Heart left ventricle (tissue), 16 donors: ENCODE measurements at regions of chr10 and their contacts with region 1.

Region 1: GRCh38 chr10:103918053-103918846 is at the start of gene STN1:
- DNase-seq: peak; percentile 98 to 99 (median 99)
- ATAC-seq: peak; percentile 98
- H3K4me3 ChIP-seq: peak within 1 kb of the TSS; percentile 27 to 97 (median 74)
- H3K27ac ChIP-seq: peak within 1 kb of the TSS; percentile 90 to 100 (median 96)
- H3K4me1 ChIP-seq: peaks cover 0 to 44% (median 29%) of the 10 kb centered on the region in 12 donors
- H3K27me3 ChIP-seq: no peaks in the 10 kb centered on the region
- CTCF ChIP-seq: peak in 4 of 12 donors; percentile 11 to 19 (median 14)
- POLR2A ChIP-seq: peak; percentile 85 to 97
- total RNA-seq, gene STN1: 28.6 to 53.1 (median 32.7) TPM

Region 2: GRCh38 chr10:103958996-103959395 is 40.7 kb after region 1 on chr10:
- intact Hi-C with region 1: loop called in 2 of 10 experiments (anchors 5 kb)
- DNase-seq: no peak
- ATAC-seq: no peak
- H3K4me3 ChIP-seq: no peak overlapping the region
- H3K27ac ChIP-seq: no peak overlapping the region
- H3K4me1 ChIP-seq: no peaks in the 10 kb centered on the region
- H3K27me3 ChIP-seq: no peaks in the 10 kb centered on the region
- CTCF ChIP-seq: no peak
- POLR2A ChIP-seq: no peak

Region 3: DNA sequence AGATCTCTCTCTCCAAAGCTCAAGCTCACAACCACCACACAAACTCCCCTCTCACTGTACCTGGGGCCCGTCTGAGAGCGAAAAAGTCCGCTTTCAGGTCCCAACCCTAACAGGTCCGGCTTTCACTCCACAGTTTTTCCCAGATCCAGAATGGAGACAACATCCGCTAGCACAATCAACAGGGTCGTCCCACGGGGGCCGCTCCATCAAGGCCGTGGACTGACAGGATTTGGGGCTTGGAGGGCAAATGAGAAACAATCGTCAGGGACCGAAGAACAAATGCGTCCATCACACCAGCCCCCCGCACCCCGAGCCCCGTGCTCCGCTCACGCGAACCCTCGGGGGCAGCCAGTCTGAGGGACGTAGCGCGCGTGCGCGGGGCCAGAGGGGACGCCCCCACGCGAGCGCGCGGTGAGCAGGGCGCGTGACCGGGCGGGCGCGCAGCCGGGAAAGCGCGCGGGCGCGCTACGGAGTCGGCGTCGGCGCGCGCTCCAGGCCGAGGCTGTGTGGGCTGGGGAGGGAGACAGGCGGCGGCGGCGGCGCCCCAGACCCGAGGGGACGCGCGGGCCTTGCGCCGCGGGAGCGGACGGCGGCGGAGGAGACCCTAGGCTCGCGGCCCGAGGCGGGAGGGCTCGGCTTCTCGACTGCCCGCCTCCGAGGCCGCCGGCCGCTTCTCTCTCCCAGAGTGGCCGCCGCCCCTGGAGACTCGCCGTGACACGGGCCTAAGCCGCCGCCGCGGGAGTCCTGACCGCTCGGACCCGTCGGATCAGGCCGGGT is 48.6 kb after region 1 on chr10 and contains the start of gene SLK:
- intact Hi-C with region 1: loop called in 8 of 10 experiments (anchors 1 to 5 kb)
- DNase-seq: peak; percentile 87 to 93 (median 89)
- ATAC-seq: peak; percentile 81 to 98 (median 96)
- H3K4me3 ChIP-seq: peak within 1 kb of the TSS; percentile 83 to 99 (median 92)
- H3K27ac ChIP-seq: peak within 1 kb of the TSS; percentile 94 to 99 (median 96)
- H3K4me1 ChIP-seq: peaks cover 0 to 43% (median 33%) of the 10 kb centered on the region in 12 donors
- H3K27me3 ChIP-seq: no peaks in the 10 kb centered on the region
- CTCF ChIP-seq: no peak
- POLR2A ChIP-seq: peak; percentile 65 to 94
- total RNA-seq, gene SLK: 33.0 to 57.8 (median 47.9) TPM